ENCODE measurements at regions of chr17 and their contacts with region 1.

Region 1: GRCh38 chr17:64145757-64146417 is 15.9 kb upstream of the ERN1 start:
- DNase-seq: peak; percentile 93
- ATAC-seq: peak; percentile 85
- H3K4me3 Mint-ChIP-seq: no peak overlapping the region
- H3K27ac Mint-ChIP-seq: no peak overlapping the region
- H3K4me1 Mint-ChIP-seq: peaks cover 23% of the 10 kb centered on the region
- H3K27me3 Mint-ChIP-seq: no peaks in the 10 kb centered on the region
- CTCF ChIP-seq: no peak

Region 2: GRCh38 chr17:64262417-64263260 is 116.8 kb after region 1 on chr17 and contains the start of gene TEX2:
- CTCF ChIA-PET with region 1: no interaction called
- POLR2A ChIA-PET with region 1: interaction called, 11 read pairs
- DNase-seq: peak; percentile 28
- ATAC-seq: 0 out of 2 replicates have a peak, but pooled peaks have one; percentile 2
- H3K4me3 Mint-ChIP-seq: peak within 1 kb of the TSS; percentile 96
- H3K27ac Mint-ChIP-seq: peak within 1 kb of the TSS; percentile 91
- H3K4me1 Mint-ChIP-seq: peaks cover 13% of the 10 kb centered on the region
- H3K27me3 Mint-ChIP-seq: peaks cover 37% of the 10 kb centered on the region
- CTCF ChIP-seq: no peak
- total RNA-seq, gene TEX2: 10.8 to 13.3 TPM (median 12.2 TPM) in 3 replicates

Region 3: DNA sequence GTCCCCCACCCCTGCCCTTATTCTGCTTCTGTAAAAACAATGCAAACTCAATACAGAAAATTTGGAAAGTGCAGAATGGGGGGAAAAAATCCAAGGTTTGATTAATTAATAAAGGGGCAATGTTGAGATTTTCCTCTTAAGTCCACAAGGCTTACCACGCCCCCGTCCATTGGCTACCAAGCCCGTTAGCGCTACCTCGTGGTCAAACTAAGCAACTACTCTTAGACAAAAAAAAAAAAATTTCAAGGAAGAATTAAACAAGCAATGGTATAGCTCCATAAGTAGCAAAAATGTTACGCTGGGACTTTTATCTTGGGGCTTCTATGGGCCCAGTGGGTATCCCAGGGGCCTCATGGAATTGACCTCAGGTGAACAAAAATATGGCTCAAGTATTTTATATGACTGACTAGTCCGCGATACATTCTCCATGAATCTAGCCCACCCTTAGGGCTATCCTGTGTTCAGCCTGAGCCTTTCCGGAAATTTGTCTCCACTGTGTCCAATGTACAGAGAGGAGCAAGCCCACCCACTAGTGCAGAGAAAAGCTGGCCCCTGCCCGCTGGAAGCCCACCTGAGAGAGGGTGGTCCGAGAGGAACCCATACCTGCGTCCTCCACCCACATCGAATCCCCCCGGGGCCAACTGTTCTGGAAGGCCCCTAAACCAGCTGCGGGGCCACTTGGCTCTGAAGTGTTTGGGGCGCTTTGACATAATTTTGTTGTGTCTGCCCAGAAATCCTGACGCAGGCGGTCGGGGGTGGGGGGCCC is 136.3 kb after region 1 on chr17:
- CTCF ChIA-PET with region 1: interaction called, 27 read pairs
- POLR2A ChIA-PET with region 1: interaction called, 4 read pairs
- DNase-seq: peak; percentile 49
- ATAC-seq: peak; percentile 71
- H3K4me3 Mint-ChIP-seq: no peak overlapping the region
- H3K27ac Mint-ChIP-seq: no peak overlapping the region
- H3K4me1 Mint-ChIP-seq: no peaks in the 10 kb centered on the region; the same call in 1 of the 2 replicates
- H3K27me3 Mint-ChIP-seq: no peaks in the 10 kb centered on the region
- CTCF ChIP-seq: peak; percentile 55

Measured in WTC11 (cell line).